Natural killer cell (primary cell): ENCODE measurements at regions of chr7 and their contacts with region 1.

Region 1: GRCh38 chr7:2698581-2699288 is 10.7 kb downstream of the AMZ1 start:
- DNase-seq: peak; percentile 45 to 85
- ATAC-seq: peak; percentile 87 to 90 (median 88)
- H3K4me3 ChIP-seq: no peak overlapping the region
- H3K4me3 Mint-ChIP-seq: peak overlapping the region; percentile 80
- H3K27ac ChIP-seq: no peak overlapping the region
- H3K27ac Mint-ChIP-seq: peak overlapping the region; percentile 70 to 77
- H3K4me1 ChIP-seq: peaks cover 29% of the 10 kb centered on the region
- H3K4me1 Mint-ChIP-seq: peaks cover 24 to 35% of the 10 kb centered on the region in 2 donors
- H3K27me3 ChIP-seq: peaks cover 2% of the 10 kb centered on the region
- H3K27me3 Mint-ChIP-seq: peaks cover 15 to 17% of the 10 kb centered on the region in 2 donors
- CTCF ChIP-seq: no peak

Region 2: GRCh38 chr7:2709553-2710285 is 11.0 kb after region 1 on chr7:
- intact Hi-C with region 1: loop called (anchors 1 kb)
- DNase-seq: peak; percentile 71 to 89
- ATAC-seq: peak; percentile 79 to 87 (median 81)
- H3K4me3 ChIP-seq: peak overlapping the region; percentile 15
- H3K4me3 Mint-ChIP-seq: peak overlapping the region; percentile 45
- H3K27ac ChIP-seq: peak overlapping the region; percentile 54
- H3K27ac Mint-ChIP-seq: no peak overlapping the region
- H3K4me1 ChIP-seq: peaks cover 36% of the 10 kb centered on the region
- H3K4me1 Mint-ChIP-seq: peaks cover 22 to 25% of the 10 kb centered on the region in 2 donors
- H3K27me3 ChIP-seq: peaks cover 30% of the 10 kb centered on the region
- H3K27me3 Mint-ChIP-seq: peaks cover 51 to 73% of the 10 kb centered on the region in 2 donors
- CTCF ChIP-seq: peak; percentile 92

Region 3: GRCh38 chr7:2844165-2844898 is 145.6 kb after region 1 on chr7 and contains the start of gene GNA12:
- intact Hi-C with region 1: loop called (anchors 2 kb)
- DNase-seq: peak; percentile 98 to 99
- ATAC-seq: peak; percentile 92 to 97 (median 93)
- H3K4me3 ChIP-seq: peak within 1 kb of the TSS; percentile 50
- H3K4me3 Mint-ChIP-seq: peak within 1 kb of the TSS; percentile 87
- H3K27ac ChIP-seq: peak within 1 kb of the TSS; percentile 26
- H3K27ac Mint-ChIP-seq: peak within 1 kb of the TSS; percentile 54 to 78
- H3K4me1 ChIP-seq: peaks cover 15% of the 10 kb centered on the region
- H3K4me1 Mint-ChIP-seq: peaks cover 13 to 30% of the 10 kb centered on the region in 2 donors
- H3K27me3 ChIP-seq: no peaks in the 10 kb centered on the region
- H3K27me3 Mint-ChIP-seq: no peaks in the 10 kb centered on the region
- CTCF ChIP-seq: no peak
- total RNA-seq, gene GNA12: 12.6 to 20.2 (median 19.5) TPM

Region 4: GRCh38 chr7:2870471-2870931 is 171.8 kb after region 1 on chr7:
- intact Hi-C with region 1: no loop called
- DNase-seq: peak in 1 of 2 donors; percentile 66
- ATAC-seq: peak; percentile 30 to 51 (median 38)
- H3K4me3 ChIP-seq: no peak overlapping the region
- H3K4me3 Mint-ChIP-seq: peak overlapping the region; percentile 46
- H3K27ac ChIP-seq: no peak overlapping the region
- H3K27ac Mint-ChIP-seq: peak overlapping the region in 1 of 2 donors; percentile 71
- H3K4me1 ChIP-seq: peaks cover 16% of the 10 kb centered on the region
- H3K4me1 Mint-ChIP-seq: peaks cover 6 to 8% of the 10 kb centered on the region in 2 donors
- H3K27me3 ChIP-seq: no peaks in the 10 kb centered on the region
- H3K27me3 Mint-ChIP-seq: peaks cover 0 to 8% of the 10 kb centered on the region in 2 donors
- CTCF ChIP-seq: no peak